A549 (cell line): ENCODE measurements at regions of chr17 and their contacts with region 1.

Region 1: DNA sequence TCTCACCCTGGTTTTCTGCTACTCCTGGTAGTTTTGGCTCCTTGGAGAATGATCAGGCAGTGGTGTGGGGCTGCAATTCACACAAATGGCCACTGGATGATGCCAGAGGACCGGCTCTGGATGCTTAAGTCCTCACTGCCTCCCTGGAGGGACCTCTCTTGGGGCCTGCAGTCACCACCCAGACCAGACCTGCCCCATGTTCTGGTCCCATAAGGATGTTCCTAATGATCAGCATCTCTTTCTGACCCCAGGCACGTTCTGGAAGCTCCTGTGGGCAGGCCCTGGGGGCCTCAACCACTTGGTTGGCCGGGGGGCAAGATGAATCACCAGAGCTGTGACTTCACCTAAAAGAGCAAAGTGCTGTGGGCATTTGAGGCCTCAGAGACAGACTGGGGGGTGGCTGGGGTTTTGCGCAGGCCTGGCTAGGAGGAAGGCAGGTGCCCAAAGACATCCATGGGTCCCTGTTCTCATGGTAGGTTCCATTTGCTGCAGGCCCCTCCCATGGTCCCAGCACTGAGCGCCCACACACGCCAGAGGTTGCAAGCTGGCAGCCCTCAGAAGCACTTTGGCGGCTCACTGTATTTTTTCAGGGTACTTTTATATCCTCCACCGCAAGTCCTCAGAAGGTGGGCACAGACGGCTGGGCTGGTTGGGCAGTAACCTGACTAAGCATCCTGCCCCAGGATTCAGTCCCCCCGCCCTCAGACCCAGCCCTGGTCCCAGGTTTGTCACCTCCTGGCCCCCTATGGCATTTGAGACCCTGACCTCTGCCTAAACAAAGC is 53.2 kb downstream of the NT5M start:
- DNase-seq: peak; percentile 91 to 96
- ATAC-seq: peak; percentile 86 to 91
- H3K4me3 ChIP-seq: no peak overlapping the region
- H3K27ac ChIP-seq: peak overlapping the region; percentile 55 to 63
- H3K4me1 ChIP-seq: no peaks in the 10 kb centered on the region
- CTCF ChIP-seq: peak; percentile 100
- EP300 ChIP-seq: no peak
- POLR2A ChIP-seq: no peak
- RAD21 ChIP-seq: peak; percentile 100

Region 2: DNA sequence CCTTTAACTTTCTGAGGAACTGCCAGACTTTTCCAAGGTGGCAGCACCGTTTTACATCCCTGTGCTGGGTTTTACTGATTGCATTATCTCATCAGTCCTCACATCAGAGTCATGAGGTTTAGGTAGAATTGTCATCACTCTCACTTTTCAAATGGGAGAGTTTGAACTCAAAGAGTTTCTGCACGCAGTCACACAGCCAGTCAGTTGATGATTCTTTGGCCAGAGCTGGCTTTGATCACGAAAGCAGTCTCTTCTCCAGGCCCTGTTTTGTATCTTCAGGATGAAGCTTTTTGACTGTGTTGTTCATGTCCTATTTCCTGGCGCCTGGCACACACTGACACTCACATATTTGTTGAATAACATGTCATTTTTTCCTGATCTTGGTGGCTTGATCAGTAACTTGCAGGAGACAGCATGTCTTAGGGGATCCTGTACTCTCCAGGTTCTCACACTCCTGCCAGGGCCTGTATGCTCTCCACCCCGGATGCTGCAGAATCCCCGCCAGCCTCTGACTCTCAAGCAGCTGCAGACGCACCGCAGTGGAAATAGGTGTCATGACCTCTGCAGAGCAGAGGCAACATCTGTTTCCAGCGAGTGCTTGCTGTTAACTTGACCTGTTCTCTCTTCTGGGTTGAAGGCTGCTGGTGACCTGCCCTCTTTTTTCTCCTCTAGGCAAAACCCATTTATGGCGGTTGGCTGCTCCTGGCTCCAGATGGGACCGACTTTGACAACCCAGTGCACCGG is 281.1 kb before region 1 on chr17:
- CTCF ChIA-PET with region 1: no interaction called
- POLR2A ChIA-PET with region 1: no interaction called
- DNase-seq: no peak
- ATAC-seq: no peak
- H3K4me3 ChIP-seq: no peak overlapping the region
- H3K27ac ChIP-seq: peak overlapping the region; percentile 40 to 64; a peak in 4 of 6 replicates
- H3K4me1 ChIP-seq: peaks cover 99% of the 10 kb centered on the region
- CTCF ChIP-seq: no peak
- EP300 ChIP-seq: no peak
- POLR2A ChIP-seq: no peak
- RAD21 ChIP-seq: no peak

Region 3: DNA sequence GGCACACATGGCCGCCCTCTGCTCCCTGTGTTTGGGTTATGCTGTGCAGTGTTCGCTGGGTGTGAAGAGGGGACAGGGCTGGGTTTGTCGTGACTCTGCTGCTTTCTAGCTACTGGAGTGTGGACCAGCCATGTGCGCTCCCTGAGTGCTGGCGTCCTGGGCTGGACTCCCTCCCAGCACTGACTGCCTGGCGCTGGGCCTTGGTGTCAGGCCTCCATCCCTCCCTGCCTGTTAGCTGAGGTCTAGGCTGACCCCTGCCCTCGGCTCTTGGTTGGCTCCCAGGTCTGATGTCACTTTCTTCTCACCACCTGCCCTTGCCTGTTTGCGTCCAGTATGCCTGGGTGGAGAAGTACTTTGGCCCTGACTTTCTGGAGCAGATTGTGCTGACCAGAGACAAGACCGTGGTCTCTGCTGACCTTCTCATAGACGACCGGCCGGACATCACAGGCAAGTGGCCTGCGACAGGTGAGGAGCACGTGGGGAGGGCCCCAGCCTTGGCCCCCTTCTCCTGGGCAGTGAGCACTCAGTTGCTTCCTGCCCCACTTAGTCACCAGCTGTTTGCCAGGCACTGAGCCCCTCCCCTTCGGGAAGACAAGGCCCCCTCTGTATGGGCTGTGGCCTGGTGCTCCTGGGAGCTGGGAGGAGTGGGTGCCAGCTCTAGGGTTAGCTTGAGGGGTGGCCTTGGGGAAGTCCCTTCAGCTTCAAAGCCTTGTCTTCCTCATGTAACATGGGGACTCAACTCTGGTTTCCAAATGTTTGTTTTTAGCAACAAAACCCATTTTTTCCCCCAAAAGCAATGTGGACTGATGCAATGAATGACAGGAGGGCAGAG is 11.7 kb before region 1 on chr17:
- CTCF ChIA-PET with region 1: interaction called, 33 read pairs
- POLR2A ChIA-PET with region 1: no interaction called
- DNase-seq: no peak
- ATAC-seq: no peak
- H3K4me3 ChIP-seq: no peak overlapping the region
- H3K27ac ChIP-seq: no peak overlapping the region
- H3K4me1 ChIP-seq: 0 out of 3 replicates have a peak, but pooled peaks cover 4% of the 10 kb centered on the region
- CTCF ChIP-seq: no peak
- EP300 ChIP-seq: no peak
- POLR2A ChIP-seq: no peak
- RAD21 ChIP-seq: no peak

Region 4: DNA sequence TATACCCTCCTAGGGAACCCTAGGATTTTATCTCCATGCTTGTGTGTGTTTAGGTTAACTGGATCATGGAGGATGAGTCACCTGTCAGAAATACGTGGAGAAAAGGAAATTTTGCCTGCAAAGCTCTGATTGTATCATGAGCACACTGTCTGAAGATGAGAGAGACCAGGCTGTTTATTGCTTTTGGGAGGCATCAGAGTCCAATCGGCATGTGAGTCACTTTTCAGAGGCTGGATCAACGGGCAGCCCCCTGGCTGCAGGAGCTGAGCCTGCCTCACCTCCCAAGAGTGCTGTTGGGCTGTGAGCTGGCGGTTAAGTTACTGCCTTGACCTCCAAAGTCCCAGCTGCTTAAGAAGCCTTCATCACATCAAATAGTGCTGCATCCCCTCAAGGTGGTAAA is 79.0 kb after region 1 on chr17:
- CTCF ChIA-PET with region 1: interaction called, 44 read pairs
- POLR2A ChIA-PET with region 1: no interaction called
- DNase-seq: peak; percentile 35 to 78
- ATAC-seq: peak; percentile 78 to 87
- H3K4me3 ChIP-seq: no peak overlapping the region
- H3K27ac ChIP-seq: peak overlapping the region; percentile 60 to 71
- H3K4me1 ChIP-seq: peaks cover 42% of the 10 kb centered on the region
- CTCF ChIP-seq: no peak
- EP300 ChIP-seq: peak; percentile 38 to 65; a peak in 1 of 5 replicates
- POLR2A ChIP-seq: no peak
- RAD21 ChIP-seq: peak in 1 of 2 experiments; percentile 28; a peak in 2 of 5 replicates

Region 5: GRCh38 chr17:17476865-17477467 is 120.6 kb after region 1 on chr17 and contains the start of gene MED9:
- CTCF ChIA-PET with region 1: interaction called, 14 read pairs
- POLR2A ChIA-PET with region 1: no interaction called
- DNase-seq: peak; percentile 95 to 97
- ATAC-seq: peak; percentile 88 to 94
- H3K4me3 ChIP-seq: peak within 1 kb of the TSS; percentile 86
- H3K27ac ChIP-seq: peak within 1 kb of the TSS; percentile 91 to 93
- H3K4me1 ChIP-seq: peaks cover 22% of the 10 kb centered on the region
- CTCF ChIP-seq: no peak
- EP300 ChIP-seq: no peak
- POLR2A ChIP-seq: peak; percentile 69
- RAD21 ChIP-seq: no peak
- polyA plus RNA-seq, gene MED9: 13.0 and 15.2 TPM in 2 replicates

Region 6: DNA sequence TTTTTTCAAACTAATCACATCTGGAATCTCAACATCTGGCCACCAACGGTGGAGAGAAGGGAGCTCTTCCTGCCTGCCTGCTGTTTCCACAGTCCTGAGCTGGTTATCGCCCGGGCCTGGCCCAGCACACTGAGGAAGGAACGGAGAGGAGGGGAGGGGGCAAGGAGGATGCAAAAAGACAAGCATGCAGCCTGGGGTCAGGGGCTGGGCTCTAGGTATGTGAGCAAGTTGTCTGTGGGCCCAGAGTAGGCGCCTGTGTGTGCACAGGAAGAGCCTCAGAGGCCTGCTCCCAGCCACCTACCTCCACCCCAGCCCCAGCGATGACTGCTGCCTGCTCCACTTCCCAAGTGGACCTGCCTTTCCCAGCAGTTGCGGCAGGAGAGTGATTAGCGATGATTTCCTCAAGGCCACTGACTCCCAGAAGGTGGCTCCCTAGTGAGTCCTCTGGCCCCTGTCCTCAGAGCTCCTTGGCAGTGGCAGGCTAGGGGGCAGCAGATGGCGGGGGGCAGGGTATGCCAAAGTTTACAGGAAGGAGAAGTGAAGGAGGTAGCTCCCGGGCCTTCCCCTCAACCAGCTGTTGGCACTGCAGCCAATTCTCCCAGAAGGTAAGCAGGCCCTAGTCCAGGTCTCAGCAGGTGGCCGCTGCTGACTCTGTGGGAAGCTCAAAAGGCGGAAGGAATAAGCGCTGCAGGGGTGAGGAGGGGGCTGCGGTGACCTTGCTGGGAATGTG is 166.8 kb after region 1 on chr17:
- CTCF ChIA-PET with region 1: interaction called, 17 read pairs
- POLR2A ChIA-PET with region 1: no interaction called
- DNase-seq: no peak
- ATAC-seq: no peak
- H3K4me3 ChIP-seq: no peak overlapping the region
- H3K27ac ChIP-seq: peak overlapping the region in 1 of 2 experiments; percentile 9; a peak in 1 of 6 replicates
- H3K4me1 ChIP-seq: peaks cover 5% of the 10 kb centered on the region; the same call in 2 of the 3 replicates
- CTCF ChIP-seq: no peak
- EP300 ChIP-seq: no peak
- POLR2A ChIP-seq: no peak
- RAD21 ChIP-seq: no peak

Region 7: DNA sequence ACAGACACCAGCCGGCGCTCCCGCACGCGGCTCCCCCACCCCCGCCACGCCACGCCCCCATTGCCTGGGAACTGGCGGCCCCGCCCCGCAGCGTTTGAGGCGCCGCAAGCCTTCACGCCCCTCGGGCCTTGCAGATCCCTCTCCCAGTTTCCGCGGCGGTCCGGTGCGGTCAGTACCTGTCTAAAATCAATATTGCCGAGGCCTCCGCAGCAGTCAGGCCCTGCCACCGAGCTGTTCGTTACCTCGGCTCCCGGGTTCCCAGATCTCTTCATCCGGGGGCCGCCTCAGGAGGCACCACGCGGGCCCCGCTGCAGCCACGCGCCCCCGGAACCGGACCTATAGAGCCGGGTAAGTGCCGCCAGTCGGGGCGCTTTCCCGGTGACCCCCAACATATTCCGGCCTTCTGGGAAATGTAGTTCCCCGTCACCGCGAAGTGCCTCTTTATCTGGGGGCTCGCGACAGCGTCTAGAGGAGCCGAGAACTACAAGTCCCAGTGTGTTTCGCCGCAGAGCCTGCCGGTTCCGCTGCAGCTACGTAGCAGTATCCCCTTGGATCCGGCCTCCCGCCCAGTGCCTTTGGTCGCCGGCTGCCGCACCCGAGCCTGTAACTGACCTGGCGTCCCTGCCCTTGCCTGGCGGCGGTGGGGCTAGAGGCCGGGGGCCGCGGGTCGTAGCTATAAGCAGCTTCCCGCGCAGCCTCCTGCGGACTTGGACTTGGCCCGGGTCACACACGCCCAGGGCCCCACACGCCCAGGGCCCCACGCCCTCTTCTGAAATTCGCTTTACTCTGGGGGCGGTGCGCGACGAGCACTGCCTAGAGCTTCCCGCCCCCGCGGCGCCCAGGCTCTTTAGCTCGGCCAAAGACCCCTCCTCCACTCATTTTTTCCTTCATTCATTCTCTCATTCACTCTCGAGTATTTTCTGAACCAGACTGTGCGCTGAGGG is 235.3 kb after region 1 on chr17 and contains the start of gene PEMT:
- CTCF ChIA-PET with region 1: interaction called, 47 read pairs
- POLR2A ChIA-PET with region 1: no interaction called
- DNase-seq: peak; percentile 96 to 100
- ATAC-seq: peak; percentile 94 to 98
- H3K4me3 ChIP-seq: peak within 1 kb of the TSS; percentile 86
- H3K27ac ChIP-seq: peak within 1 kb of the TSS; percentile 89 to 94
- H3K4me1 ChIP-seq: peaks cover 16% of the 10 kb centered on the region
- CTCF ChIP-seq: no peak
- EP300 ChIP-seq: no peak
- POLR2A ChIP-seq: peak; percentile 78
- RAD21 ChIP-seq: no peak
- polyA plus RNA-seq, gene PEMT: 47.8 and 62.4 TPM in 2 replicates

Region 8: GRCh38 chr17:17641621-17642409 is 285.5 kb after region 1 on chr17:
- CTCF ChIA-PET with region 1: interaction called, 365 read pairs
- POLR2A ChIA-PET with region 1: no interaction called
- DNase-seq: peak; percentile 70 to 85
- ATAC-seq: peak; percentile 85 to 96
- H3K4me3 ChIP-seq: no peak overlapping the region
- H3K27ac ChIP-seq: no peak overlapping the region
- H3K4me1 ChIP-seq: no peaks in the 10 kb centered on the region
- CTCF ChIP-seq: peak; percentile 97
- EP300 ChIP-seq: no peak
- POLR2A ChIP-seq: no peak
- RAD21 ChIP-seq: peak; percentile 97 to 99